ENCODE measurements at regions of chr18 and their contacts with region 1.

Region 1: GRCh38 chr18:3245853-3246634 is 1.6 kb upstream of the MYL12A start:
- DNase-seq: peak; percentile 91 to 97
- H3K4me3 ChIP-seq: peak overlapping the region; percentile 56 to 89 (median 78)
- H3K27ac ChIP-seq: peak overlapping the region; percentile 96 to 100 (median 99)
- H3K4me1 ChIP-seq: peaks cover 15 to 51% (median 34%) of the 10 kb centered on the region in 4 donors
- H3K27me3 ChIP-seq: no peaks in the 10 kb centered on the region
- CTCF ChIP-seq: peak in 6 of 7 experiments; percentile 38 to 97 (median 94)
- EP300 ChIP-seq: no peak
- POLR2A ChIP-seq: no peak

Region 2: DNA sequence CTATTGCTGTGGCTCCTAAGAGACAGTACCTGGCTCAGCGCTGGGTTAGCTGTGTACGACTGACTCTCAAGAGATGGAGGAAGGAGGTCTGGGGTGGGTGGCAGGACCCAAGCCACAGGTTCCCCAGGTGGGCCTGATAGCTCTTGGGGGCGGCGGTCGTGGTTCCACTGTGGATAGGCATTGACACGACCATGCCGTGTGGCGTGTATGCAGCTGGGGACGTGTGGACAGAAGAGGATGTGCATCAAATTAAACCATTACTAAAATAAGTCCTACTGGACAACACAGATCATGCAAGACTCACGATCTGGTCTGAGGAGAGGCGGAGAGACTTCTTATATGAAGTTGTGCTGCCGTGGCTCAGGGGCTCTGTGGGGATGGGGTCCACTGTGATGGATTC is 321.1 kb before region 1 on chr18:
- intact Hi-C with region 1: loop called (anchors 5 kb)
- DNase-seq: no peak
- H3K4me3 ChIP-seq: no peak overlapping the region
- H3K27ac ChIP-seq: no peak overlapping the region
- H3K4me1 ChIP-seq: no peaks in the 10 kb centered on the region
- H3K27me3 ChIP-seq: no peaks in the 10 kb centered on the region
- CTCF ChIP-seq: no peak
- EP300 ChIP-seq: no peak
- POLR2A ChIP-seq: no peak

Region 3: GRCh38 chr18:3075491-3075890 is 170.6 kb before region 1 on chr18:
- intact Hi-C with region 1: no loop called
- DNase-seq: no peak
- H3K4me3 ChIP-seq: no peak overlapping the region
- H3K27ac ChIP-seq: no peak overlapping the region
- H3K4me1 ChIP-seq: no peaks in the 10 kb centered on the region
- H3K27me3 ChIP-seq: no peaks in the 10 kb centered on the region
- CTCF ChIP-seq: no peak
- EP300 ChIP-seq: no peak
- POLR2A ChIP-seq: no peak